Activated naive CD4-positive, alpha-beta T cell treated with anti-CD3 and anti-CD28 coated beads for 36 hours (primary cell): ENCODE measurements at regions of chr12 and their contacts with region 1.

Region 1: DNA sequence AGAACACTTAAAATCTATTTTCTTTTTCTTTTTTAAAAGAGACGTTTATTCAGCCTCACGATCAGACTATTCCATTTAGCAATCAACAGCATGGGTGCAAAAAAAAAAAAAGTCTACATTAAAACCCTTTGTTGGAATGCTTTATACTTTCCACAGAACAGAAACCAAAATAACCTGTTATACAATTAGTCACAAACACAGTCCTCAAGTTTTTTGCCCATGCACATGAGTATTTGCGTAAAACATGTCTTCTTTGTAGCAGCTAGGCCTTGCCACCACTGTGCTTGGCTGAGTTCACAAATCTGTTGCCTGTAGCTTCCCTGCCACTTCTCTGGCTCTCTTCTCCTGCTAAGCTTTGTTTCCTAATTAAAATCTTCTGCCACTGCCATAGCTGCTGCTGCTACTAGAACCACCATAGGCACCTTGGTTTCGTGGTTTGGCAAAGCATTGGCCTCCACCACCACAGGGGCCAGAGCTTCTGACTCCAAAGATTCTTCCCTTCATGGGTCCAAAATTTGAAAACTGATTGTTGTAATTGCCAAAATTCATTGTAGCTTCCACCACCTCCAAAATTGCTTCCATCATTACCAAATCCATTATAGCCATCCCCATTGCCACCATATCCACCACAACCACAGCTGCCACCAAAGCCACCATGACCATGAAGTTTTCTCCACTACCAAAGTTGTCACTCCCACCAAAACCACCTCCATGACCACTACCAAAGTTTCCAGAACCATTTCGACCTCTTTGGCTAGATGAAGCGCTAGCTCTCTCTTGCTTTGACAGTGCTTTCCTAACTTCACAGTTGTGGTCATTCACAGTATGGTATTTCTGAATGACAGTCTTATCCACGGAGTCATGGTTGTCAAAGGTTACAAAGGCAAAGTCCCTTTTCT is 38.1 kb downstream of the KLRG1 start:
- DNase-seq: peak; percentile 28
- H3K4me3 Mint-ChIP-seq: peak overlapping the region; percentile 6
- H3K27ac Mint-ChIP-seq: peak overlapping the region; percentile 69
- H3K4me1 Mint-ChIP-seq: peaks cover 50% of the 10 kb centered on the region
- H3K27me3 Mint-ChIP-seq: no peaks in the 10 kb centered on the region

Region 2: DNA sequence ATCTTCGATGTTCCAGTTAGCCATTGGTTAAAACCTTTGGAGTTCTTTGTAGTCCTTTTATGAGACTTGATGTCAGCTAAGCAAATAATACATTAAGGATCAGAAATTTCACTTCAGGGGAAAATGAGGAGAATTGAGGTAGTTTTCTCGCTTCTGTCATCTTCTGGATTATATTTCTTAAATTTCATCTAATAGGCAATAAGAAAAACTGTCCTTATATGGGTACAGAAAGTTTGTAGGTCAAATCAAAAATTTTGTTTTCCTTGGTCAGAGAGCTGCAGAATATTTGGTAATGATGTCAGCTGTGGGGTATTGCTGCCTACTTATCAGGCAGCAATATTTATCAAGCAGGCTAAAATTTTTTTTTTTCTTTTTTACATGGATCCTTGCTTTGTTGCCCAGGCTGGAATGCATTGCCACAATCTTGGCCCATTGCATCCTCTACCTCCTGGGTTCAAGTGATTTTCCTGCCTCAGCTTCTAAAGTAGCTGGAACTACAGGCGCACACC is 292.5 kb before region 1 on chr12:
- CTCF ChIA-PET with region 1: no interaction called
- intact Hi-C with region 1: no loop called
- DNase-seq: no peak
- H3K4me3 Mint-ChIP-seq: no peak overlapping the region
- H3K27ac Mint-ChIP-seq: no peak overlapping the region
- H3K4me1 Mint-ChIP-seq: peaks cover 3% of the 10 kb centered on the region
- H3K27me3 Mint-ChIP-seq: no peaks in the 10 kb centered on the region

Region 3: DNA sequence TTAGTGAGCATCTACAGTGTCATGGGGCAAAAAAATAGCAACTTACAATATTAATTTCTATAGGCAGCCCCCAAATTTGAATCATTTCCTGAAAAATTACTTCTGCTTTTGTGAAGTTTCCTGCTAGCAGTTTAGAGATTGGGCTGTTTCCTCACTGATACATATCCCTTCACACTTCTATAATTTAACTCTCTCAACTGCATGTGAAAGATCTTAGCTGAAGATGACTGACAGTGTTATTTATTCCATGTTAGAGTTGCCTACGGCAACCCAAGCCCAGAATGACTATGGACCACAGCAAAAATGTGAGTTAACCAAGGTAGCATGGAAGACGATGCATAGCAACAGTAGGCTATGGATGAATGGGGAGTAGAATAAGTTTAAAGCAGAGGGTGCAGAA is 38.0 kb before region 1 on chr12 and contains the start of gene KLRG1:
- CTCF ChIA-PET with region 1: interaction called, 5 read pairs
- intact Hi-C with region 1: loop called (anchors 1 kb)
- DNase-seq: peak; percentile 55
- H3K4me3 Mint-ChIP-seq: peak within 1 kb of the TSS; percentile 53
- H3K27ac Mint-ChIP-seq: peak within 1 kb of the TSS; percentile 43
- H3K4me1 Mint-ChIP-seq: peaks cover 61% of the 10 kb centered on the region
- H3K27me3 Mint-ChIP-seq: no peaks in the 10 kb centered on the region
- total RNA-seq, gene KLRG1: 3.9 to 5.2 TPM